ENCODE measurements at regions of chr14 and their contacts with region 1.

Region 1: DNA sequence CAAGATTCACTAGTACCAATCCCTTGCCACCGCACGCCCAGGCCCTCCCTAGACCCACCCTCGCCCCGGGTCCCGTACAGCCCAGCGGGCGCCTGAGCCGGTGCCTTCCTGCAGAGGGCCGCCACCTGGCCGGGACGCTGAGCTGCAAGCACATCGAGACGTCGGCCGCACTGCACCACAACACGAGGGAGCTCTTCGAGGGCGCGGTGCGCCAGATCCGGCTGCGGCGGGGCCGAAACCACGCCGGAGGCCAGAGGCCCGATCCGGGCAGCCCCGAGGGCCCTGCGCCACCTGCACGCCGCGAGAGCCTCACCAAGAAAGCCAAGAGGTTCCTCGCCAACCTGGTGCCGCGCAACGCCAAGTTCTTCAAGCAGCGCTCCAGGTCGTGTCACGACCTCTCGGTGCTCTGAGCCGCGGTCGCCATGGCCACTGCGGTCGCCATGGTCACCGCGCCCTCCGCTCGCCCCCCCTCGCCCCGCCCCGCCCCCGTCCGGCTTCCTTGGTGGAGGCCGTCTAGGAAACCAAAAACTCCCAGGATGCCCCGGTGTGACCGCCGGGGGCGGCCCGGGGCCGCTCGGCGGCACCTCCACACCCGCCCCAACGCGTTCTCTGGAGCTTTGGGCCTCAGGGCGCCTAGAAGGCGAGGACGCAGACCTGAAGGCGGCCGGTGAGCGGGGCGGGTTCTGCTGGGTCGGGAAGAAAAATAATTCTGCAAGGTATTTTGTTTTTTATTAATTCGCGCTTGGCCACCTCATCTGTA is 3.7 kb downstream of the REM2 start:
- DNase-seq: peak; percentile 86
- H3K4me3 ChIP-seq: peak overlapping the region; percentile 71
- H3K27ac ChIP-seq: peak overlapping the region; percentile 96
- H3K4me1 ChIP-seq: peaks cover 80% of the 10 kb centered on the region
- CTCF ChIP-seq: peak; percentile 65

Region 2: DNA sequence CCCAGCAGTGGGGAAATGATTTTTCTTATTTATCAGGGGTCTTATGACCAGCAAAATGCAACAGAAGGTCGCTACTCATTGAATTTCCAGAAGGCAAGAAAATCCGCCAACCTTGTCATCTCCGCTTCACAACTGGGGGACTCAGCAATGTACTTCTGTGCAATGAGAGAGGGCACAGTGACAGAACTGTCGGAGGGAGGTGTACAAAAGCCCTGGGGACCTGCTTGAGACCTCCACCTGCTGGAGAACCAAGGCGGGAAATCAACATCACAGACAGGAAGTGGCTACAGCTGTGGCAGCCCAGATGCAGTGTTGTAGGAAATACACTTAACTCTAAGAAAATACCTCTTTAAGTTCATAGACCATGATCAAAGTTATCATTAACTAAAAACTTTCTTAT is 962.2 kb before region 1 on chr14:
- CTCF ChIA-PET with region 1: no interaction called
- POLR2A ChIA-PET with region 1: no interaction called
- intact Hi-C with region 1: loop called (anchors 5 kb)
- DNase-seq: peak; percentile 98
- H3K4me3 ChIP-seq: peak overlapping the region; percentile 40
- H3K27ac ChIP-seq: peak overlapping the region; percentile 91
- H3K4me1 ChIP-seq: peaks cover 36% of the 10 kb centered on the region
- CTCF ChIP-seq: peak; percentile 62

Region 3: GRCh38 chr14:22483863-22484593 is 402.7 kb before region 1 on chr14:
- CTCF ChIA-PET with region 1: no interaction called
- POLR2A ChIA-PET with region 1: no interaction called
- intact Hi-C with region 1: no loop called
- DNase-seq: no peak
- H3K4me3 ChIP-seq: peak overlapping the region; percentile 40
- H3K27ac ChIP-seq: peak overlapping the region; percentile 61
- H3K4me1 ChIP-seq: peaks cover 100% of the 10 kb centered on the region
- CTCF ChIP-seq: no peak

Region 4: DNA sequence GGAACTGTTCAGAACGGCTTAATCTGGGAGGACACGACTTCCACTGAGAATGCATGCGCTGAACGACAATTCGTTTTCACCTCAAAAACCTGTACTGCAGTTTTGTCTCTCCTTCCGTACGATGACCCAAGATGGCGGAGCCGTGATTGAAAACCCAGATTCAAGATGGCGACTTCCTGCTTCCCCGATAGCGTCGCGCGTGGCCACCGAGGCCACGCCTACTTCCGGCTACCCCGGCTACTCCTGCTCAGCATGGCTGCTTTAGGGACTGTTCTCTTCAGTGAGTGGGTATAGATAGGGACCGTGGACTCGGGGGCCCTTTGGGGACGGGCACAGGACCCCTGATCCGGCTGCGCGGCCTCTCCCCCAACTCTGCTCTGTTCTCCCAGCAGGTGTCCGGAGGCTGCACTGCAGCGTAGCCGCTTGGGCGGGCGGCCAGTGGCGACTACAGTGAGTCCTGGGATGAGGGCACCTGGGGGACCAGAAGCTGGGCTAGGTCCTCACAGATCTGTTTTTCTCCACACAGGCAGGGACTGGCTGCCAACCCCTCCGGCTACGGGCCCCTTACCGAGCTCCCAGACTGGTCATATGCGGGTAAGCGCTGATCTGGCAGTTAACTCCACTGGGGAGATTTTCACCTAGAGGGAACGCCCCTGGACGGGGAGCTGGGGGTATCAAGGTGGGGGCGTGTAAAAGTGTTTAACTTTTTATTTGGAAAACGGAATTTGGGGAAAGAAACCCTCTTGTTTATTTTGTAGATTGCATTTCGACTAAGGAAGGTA is 56.8 kb before region 1 on chr14 and contains the start of gene MRPL52:
- CTCF ChIA-PET with region 1: interaction called, 3 read pairs
- POLR2A ChIA-PET with region 1: interaction called, 11 read pairs
- intact Hi-C with region 1: no loop called
- DNase-seq: peak; percentile 96
- H3K4me3 ChIP-seq: peak within 1 kb of the TSS; percentile 74
- H3K27ac ChIP-seq: peak within 1 kb of the TSS; percentile 69
- H3K4me1 ChIP-seq: peaks cover 50% of the 10 kb centered on the region
- CTCF ChIP-seq: no peak
- total RNA-seq, gene MRPL52: 100 and 126 TPM in 2 replicates

Region 5: DNA sequence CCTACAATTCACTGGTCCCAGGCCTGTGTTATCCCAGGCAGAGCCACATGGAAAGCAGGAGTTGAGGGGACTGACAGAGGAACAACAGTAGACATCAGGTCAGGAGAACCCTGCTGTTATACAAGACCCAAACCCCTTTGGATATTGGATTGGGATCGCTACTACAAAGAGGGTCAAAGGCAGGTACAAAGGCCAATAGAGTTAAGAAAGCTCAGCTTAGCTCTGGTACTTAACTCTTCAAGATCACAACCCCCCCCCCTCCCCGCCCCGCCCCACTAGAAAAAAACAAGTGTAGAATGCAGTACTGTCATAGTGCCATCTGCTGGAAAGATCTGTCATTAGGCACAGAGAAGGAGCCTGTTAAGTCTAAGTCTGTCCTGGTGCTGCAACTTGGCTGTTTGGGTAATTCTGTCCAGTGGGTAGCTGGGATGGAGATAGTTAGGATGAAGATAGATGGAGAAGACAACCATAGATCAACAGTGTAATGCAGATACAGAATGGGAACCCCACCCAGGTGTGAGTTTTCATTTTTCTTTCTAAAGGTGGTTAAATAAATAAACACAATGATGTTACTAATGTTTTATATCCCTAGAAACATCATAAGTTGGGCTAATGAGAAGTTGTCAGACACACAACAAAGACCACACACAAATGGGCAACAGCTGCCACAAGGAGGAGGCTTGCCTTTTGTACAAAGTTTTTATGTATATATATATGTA is 13.6 kb after region 1 on chr14:
- CTCF ChIA-PET with region 1: interaction called, 3 read pairs
- POLR2A ChIA-PET with region 1: interaction called, 16 read pairs
- intact Hi-C with region 1: loop called (anchors 1 kb)
- DNase-seq: peak; percentile 83
- H3K4me3 ChIP-seq: no peak overlapping the region
- H3K27ac ChIP-seq: peak overlapping the region; percentile 14
- H3K4me1 ChIP-seq: peaks cover 10% of the 10 kb centered on the region
- CTCF ChIP-seq: peak; percentile 82

Region 6: GRCh38 chr14:22929104-22929847 is 42.6 kb after region 1 on chr14 and contains the start of gene PRMT5:
- CTCF ChIA-PET with region 1: no interaction called
- POLR2A ChIA-PET with region 1: interaction called, 7 read pairs
- intact Hi-C with region 1: loop called (anchors 2 kb)
- DNase-seq: peak; percentile 99
- H3K4me3 ChIP-seq: peak within 1 kb of the TSS; percentile 91
- H3K27ac ChIP-seq: peak within 1 kb of the TSS; percentile 70
- H3K4me1 ChIP-seq: peaks cover 32% of the 10 kb centered on the region
- CTCF ChIP-seq: no peak
- total RNA-seq, gene PRMT5: 82.2 and 93.1 TPM in 2 replicates